Activated naive CD4-positive, alpha-beta T cell treated with anti-CD3 and anti-CD28 coated beads for 36 hours (primary cell): ENCODE measurements at regions of chr16 and their contacts with region 1.

Region 1: DNA sequence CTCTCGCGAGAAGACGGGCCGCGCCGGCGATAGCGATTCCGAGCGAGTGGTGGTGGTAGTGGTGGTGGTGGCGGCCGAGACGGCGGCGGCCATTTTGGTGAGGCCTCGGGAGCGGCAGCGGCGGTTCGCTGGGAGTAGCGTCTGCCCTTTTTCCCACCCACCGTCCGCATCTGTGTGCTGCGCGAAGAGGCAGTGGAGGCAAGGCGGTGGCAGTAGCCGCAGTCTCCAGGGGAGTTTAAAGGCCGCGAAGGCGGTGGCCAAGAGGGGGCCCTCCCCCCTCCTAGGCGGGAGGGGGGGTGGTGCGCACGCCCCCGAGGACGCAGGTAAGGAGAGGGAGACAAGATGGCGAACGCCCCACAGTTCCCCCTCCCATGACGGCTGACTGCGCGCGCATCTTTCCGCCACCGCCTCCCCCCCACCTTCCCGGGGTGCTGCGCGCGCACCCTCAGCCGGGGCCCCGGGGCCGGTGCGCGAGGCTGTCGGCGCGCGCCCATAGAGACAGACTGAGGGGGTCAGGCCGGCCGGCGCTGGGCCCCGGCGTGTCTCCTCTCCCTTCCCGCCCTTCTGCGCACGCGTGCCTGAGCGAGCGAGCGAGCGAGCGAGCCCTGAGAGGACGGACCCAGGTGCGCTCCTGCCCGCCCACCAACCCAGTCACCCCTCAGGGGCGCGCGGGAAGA is 694 bp upstream of the SRCAP start:
- DNase-seq: peak; percentile 100
- H3K4me3 Mint-ChIP-seq: peak overlapping the region; percentile 94
- H3K27ac Mint-ChIP-seq: peak overlapping the region; percentile 99
- H3K4me1 Mint-ChIP-seq: peaks cover 37% of the 10 kb centered on the region
- H3K27me3 Mint-ChIP-seq: no peaks in the 10 kb centered on the region

Region 2: GRCh38 chr16:30378236-30379204 is 319.8 kb before region 1 on chr16:
- CTCF ChIA-PET with region 1: interaction called, 5 read pairs
- intact Hi-C with region 1: loop called (anchors 2 kb)
- DNase-seq: peak; percentile 100
- H3K4me3 Mint-ChIP-seq: peak overlapping the region; percentile 99
- H3K27ac Mint-ChIP-seq: peak overlapping the region; percentile 99
- H3K4me1 Mint-ChIP-seq: peaks cover 43% of the 10 kb centered on the region
- H3K27me3 Mint-ChIP-seq: no peaks in the 10 kb centered on the region

Region 3: GRCh38 chr16:30628627-30629540 is 69.4 kb before region 1 on chr16:
- CTCF ChIA-PET with region 1: interaction called, 14 read pairs
- intact Hi-C with region 1: loop called (anchors 1 kb)
- DNase-seq: peak; percentile 97
- H3K4me3 Mint-ChIP-seq: peak overlapping the region; percentile 55
- H3K27ac Mint-ChIP-seq: peak overlapping the region; percentile 82
- H3K4me1 Mint-ChIP-seq: peaks cover 8% of the 10 kb centered on the region
- H3K27me3 Mint-ChIP-seq: no peaks in the 10 kb centered on the region

Region 4: DNA sequence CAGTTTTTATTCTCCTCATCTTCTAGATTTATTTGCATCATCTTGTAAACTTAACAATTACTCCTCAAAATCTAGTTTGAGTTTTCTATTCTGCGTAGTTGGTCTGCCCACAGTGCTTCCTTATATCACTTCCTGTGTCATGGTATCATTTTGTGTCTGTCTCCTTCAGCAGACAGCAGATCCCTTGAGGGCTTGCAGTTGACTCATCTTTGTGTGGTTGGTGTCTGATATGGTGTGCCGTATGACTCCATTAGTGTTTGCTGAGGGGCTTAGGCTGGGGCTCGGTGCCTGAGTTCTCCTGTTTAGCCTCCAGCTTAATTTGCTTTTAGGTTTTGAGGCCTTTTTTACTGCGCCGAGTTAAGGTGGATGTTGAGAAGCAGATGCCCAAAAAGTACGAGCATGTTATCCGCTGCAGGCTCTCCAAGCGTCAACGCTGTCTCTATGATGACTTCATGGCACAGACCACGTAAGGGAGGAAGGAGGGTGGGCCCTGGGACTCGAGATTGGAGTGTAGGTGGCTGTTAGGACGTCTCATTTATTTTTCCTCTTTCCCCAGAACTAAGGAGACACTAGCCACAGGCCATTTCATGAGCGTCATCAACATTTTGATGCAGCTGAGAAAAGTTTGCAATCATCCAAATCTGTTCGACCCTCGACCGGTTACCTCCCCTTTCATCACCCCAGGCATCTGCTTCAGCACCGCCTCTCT is 17.6 kb after region 1 on chr16:
- CTCF ChIA-PET with region 1: interaction called, 4 read pairs
- intact Hi-C with region 1: loop called (anchors 2 kb)
- DNase-seq: peak; percentile 61
- H3K4me3 Mint-ChIP-seq: no peak overlapping the region
- H3K27ac Mint-ChIP-seq: peak overlapping the region; percentile 90
- H3K4me1 Mint-ChIP-seq: peaks cover 31% of the 10 kb centered on the region
- H3K27me3 Mint-ChIP-seq: no peaks in the 10 kb centered on the region

Region 5: GRCh38 chr16:30731411-30731810 is 33.1 kb after region 1 on chr16:
- CTCF ChIA-PET with region 1: no interaction called
- intact Hi-C with region 1: no loop called
- DNase-seq: no peak
- H3K4me3 Mint-ChIP-seq: no peak overlapping the region
- H3K27ac Mint-ChIP-seq: peak overlapping the region; percentile 41
- H3K4me1 Mint-ChIP-seq: peaks cover 2% of the 10 kb centered on the region
- H3K27me3 Mint-ChIP-seq: no peaks in the 10 kb centered on the region

Region 6: DNA sequence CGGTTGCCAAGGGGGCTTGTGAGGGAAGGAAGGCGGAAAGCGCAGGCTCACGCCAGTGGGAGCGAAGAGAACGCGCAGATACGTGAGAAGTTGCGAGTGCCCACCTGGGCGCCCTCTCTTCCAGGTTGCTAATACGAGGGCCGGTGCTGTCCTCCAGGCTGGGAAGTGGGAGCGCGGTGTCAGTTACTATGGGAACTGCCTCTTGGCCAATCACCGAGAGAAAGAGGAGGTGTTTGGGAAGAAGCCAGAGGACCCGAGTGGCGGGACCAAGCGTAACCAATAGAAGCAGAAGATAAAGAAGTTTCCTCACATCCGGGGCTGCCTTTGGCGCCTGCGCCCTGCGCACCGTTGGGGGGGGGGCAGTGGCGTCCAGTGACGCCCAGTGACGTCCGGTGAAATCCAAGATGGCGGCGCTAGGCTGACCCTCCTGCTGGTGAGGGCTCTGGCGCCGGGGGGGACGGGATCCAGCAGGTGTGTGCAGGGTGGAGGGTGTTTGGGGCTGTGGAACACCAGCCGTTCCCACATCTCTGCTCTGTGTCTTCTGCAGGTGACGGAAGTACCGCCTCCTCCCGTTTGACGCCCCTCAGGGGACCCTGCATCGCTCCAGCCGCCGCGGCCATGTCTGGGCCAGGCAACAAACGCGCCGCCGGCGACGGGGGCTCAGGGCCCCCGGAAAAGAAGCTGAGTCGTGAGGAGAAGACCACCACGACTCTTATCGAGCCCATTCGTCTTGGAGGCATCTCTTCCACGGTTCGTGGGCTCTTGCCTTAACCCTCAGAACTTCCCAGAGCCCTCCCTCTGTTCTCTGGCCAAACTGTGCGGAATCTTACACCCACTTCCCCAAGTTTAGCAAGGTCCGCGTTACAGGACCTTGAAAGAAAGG is 63.9 kb after region 1 on chr16 and contains the starts of genes CFAP119 and RNF40:
- CTCF ChIA-PET with region 1: no interaction called
- intact Hi-C with region 1: loop called (anchors 1 kb)
- DNase-seq: peak; percentile 95
- H3K4me3 Mint-ChIP-seq: peak within 1 kb of the TSS; percentile 94
- H3K27ac Mint-ChIP-seq: peak within 1 kb of the TSS; percentile 87
- H3K4me1 Mint-ChIP-seq: peaks cover 25% of the 10 kb centered on the region
- H3K27me3 Mint-ChIP-seq: no peaks in the 10 kb centered on the region
- total RNA-seq, gene CFAP119: 2.0 to 2.3 TPM
- total RNA-seq, gene RNF40: 51.1 to 61.0 TPM